A549 (cell line): ENCODE measurements at regions of chr20 and their contacts with region 1.

Region 1: DNA sequence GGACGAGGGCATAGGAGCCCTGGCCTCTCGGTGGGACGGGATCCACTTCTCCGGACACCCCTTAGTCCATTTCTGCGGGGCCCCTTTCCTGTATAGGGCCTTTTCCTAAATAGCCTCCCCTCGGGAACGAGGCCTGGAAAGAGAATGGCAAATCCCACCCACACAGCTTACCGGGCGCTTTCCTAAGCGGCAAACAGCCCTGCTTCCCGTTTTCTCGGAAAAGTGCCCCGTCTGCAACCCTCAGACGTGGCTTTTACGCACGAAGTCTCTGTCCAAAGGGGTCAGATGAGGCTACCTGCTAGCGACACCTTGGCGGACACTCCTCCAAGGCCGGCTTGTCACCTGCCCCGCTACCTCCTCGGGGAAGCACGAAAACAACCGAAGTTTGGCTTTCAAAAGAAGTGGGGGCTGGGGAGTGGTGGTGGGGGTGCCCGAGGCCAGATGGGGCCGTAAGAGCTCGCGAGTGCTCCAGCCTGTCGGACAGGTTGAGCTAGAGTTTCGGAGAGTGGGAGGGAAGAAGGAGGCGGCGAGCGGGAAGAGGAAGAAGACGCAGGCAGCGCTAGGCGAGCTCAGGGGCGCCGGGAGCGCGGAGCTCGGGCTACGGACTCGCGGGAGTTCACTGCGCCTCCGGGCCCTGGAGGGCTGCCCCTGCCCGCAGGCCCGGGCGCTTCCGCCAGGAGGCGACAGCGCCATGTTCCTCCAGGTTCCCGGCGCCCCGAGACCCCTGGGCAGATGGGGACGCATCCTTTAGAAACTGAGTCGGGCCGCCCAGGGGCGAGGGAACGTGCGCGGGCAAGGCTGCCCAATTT is 768 bp downstream of the TFAP2C start:
- DNase-seq: peak; percentile 83 to 88
- ATAC-seq: peak; percentile 76 to 87
- H3K4me3 ChIP-seq: peak overlapping the region; percentile 86
- H3K27ac ChIP-seq: peak overlapping the region; percentile 90 to 94
- H3K4me1 ChIP-seq: peaks cover 33% of the 10 kb centered on the region
- CTCF ChIP-seq: peak; percentile 88
- EP300 ChIP-seq: no peak
- POLR2A ChIP-seq: no peak
- RAD21 ChIP-seq: peak; percentile 69 to 94

Region 2: DNA sequence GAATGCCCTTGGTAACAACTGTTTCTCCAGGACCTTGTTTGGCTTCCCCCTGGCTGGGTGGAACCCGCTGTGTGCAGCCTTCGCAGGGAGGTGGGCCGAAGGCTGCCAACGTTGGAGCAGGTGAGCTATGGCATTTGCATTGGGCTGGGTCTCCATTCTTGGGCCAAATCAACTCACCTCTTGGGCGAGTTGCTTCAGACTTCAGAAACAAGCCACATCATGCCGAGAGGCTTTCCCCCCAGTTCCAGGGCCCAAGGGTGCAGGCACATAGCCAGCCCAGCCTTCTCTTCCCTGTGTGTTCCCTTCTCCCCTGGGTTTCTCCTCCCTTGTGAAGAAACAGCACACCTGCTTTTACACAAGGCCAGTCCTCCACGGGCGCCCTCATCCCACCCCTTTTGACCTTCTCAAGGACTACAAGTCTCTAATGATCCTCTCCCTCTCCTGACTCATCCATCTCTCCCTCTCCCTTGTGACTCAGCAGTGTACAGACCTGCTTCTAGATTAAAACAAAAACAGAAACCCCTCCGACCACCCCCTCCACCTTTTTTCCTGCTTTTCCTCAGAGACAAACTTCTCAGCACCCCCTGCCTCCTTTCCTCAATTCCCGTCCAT is 55.2 kb before region 1 on chr20:
- CTCF ChIA-PET with region 1: interaction called, 10 read pairs
- POLR2A ChIA-PET with region 1: no interaction called
- DNase-seq: no peak
- ATAC-seq: peak; percentile 17 to 37; a peak in 2 of 6 replicates
- H3K4me3 ChIP-seq: no peak overlapping the region
- H3K27ac ChIP-seq: no peak overlapping the region
- H3K4me1 ChIP-seq: no peaks in the 10 kb centered on the region
- CTCF ChIP-seq: no peak
- EP300 ChIP-seq: no peak
- POLR2A ChIP-seq: no peak
- RAD21 ChIP-seq: no peak

Region 3: DNA sequence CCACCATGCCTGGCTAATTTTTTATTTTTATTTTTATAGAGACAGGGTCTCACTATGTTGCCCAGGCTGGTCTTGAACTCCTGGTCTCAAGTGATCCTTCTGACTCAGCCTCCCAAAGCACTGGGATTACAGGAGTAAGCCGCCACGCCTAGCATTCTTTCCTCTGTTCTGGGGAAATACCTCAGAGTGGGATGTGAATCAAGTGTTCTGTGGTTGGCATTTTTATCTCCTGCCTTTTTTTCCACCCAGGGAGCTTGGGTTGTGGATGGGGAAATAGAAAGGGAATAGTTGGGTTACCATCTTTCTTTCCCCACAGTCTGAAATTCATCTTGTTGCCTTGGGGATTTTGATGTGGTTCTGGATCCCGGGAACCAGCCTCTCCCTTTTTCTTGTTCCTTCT is 23.3 kb after region 1 on chr20:
- CTCF ChIA-PET with region 1: interaction called, 11 read pairs
- POLR2A ChIA-PET with region 1: interaction called, 4 read pairs
- DNase-seq: peak in 1 of 2 experiments; percentile 45
- ATAC-seq: no peak
- H3K4me3 ChIP-seq: no peak overlapping the region
- H3K27ac ChIP-seq: no peak overlapping the region
- H3K4me1 ChIP-seq: no peaks in the 10 kb centered on the region
- CTCF ChIP-seq: no peak
- EP300 ChIP-seq: no peak
- POLR2A ChIP-seq: no peak
- RAD21 ChIP-seq: no peak

Region 4: DNA sequence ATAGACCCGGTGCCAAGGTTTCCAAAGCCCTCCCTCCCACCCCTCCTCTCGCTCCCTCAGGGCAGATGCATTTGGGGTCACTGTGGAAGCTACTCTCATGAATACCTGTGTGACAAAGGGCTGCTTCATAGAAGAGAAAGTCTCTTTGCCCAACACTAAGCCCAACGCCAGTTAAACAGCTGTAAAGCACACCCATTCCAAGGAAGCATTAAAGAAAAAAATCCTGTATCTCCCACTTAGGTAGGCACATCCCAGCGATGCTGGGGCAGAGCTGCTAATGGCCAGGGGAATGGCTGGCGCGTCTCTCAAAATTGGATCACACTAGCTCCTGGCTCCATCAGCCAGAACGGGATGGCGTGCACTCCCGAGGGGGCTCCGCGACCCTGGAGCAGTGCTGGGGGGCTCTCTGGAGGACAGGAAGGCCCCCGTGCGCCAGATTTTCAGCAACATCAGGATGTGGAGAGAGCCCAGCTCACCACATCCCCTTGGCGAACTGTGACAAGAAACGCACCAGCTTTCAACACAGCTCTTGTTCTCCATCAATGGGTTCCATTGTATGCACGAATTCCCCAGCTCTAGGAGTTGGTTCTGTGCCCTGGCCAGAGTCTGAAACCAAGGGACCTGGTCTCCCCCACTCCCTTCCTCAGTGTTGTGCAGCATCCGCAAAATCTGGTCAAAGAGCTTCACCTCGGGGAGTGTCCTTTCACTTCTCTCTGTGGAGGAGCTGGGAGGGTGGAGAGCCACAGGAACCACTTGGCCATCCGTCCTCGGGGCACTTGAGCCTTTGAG is 73.3 kb after region 1 on chr20:
- CTCF ChIA-PET with region 1: no interaction called
- POLR2A ChIA-PET with region 1: no interaction called
- DNase-seq: no peak
- ATAC-seq: no peak
- H3K4me3 ChIP-seq: no peak overlapping the region
- H3K27ac ChIP-seq: no peak overlapping the region
- H3K4me1 ChIP-seq: no peaks in the 10 kb centered on the region
- CTCF ChIP-seq: no peak
- EP300 ChIP-seq: no peak
- POLR2A ChIP-seq: no peak
- RAD21 ChIP-seq: no peak

Region 5: GRCh38 chr20:56957737-56958553 is 328.1 kb after region 1 on chr20:
- CTCF ChIA-PET with region 1: interaction called, 15 read pairs
- POLR2A ChIA-PET with region 1: no interaction called
- DNase-seq: no peak
- ATAC-seq: no peak
- H3K4me3 ChIP-seq: no peak overlapping the region
- H3K27ac ChIP-seq: no peak overlapping the region
- H3K4me1 ChIP-seq: peaks cover 6% of the 10 kb centered on the region
- CTCF ChIP-seq: no peak
- EP300 ChIP-seq: no peak
- POLR2A ChIP-seq: no peak
- RAD21 ChIP-seq: no peak

Region 6: GRCh38 chr20:56985286-56985685 is 355.4 kb after region 1 on chr20:
- CTCF ChIA-PET with region 1: interaction called, 121 read pairs
- POLR2A ChIA-PET with region 1: no interaction called
- DNase-seq: no peak
- ATAC-seq: no peak
- H3K4me3 ChIP-seq: no peak overlapping the region
- H3K27ac ChIP-seq: no peak overlapping the region
- H3K4me1 ChIP-seq: no peaks in the 10 kb centered on the region
- CTCF ChIP-seq: no peak
- EP300 ChIP-seq: no peak
- POLR2A ChIP-seq: no peak
- RAD21 ChIP-seq: no peak

Region 7: DNA sequence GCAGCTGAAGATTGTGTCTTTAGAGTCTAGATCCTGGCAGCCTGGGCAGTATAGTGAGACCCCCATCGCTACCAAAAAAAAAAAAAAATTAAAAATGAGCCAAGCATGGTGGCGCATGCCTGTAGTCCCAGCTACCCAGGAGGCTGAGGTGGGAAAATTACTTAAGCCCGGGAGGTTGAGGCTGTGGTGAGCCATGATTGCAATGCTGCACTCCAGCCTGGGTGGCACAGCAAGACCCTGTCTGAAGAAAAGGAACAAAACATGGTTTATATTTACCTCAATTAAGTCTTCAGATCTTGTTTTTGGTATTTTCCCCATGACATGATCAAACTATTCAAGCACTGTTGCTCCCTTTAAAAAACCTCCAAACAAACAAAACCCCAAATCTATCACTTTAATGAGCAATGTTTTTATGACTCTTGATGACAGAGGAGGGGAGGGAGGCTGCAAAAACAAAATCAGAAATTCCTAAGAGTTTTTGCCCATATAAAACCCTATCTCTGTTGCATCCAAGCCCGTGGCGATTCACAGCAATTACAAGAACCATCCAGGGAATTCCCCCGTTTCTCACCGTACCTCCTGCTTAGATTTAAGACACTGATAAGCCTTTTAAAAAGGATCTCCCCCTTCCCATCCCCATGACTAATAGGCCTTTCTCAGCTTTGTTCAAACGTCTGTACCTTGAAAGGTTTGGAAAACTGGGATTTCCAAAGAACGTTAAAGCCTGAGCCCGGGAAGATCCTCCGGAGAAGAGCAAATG is 376.7 kb after region 1 on chr20:
- CTCF ChIA-PET with region 1: interaction called, 15 read pairs
- POLR2A ChIA-PET with region 1: no interaction called
- DNase-seq: peak; percentile 31 to 42
- ATAC-seq: peak in 1 of 2 experiments; percentile 54; a peak in 4 of 6 replicates
- H3K4me3 ChIP-seq: no peak overlapping the region
- H3K27ac ChIP-seq: peak overlapping the region in 1 of 2 experiments; percentile 73; a peak in 3 of 6 replicates
- H3K4me1 ChIP-seq: peaks cover 30% of the 10 kb centered on the region
- CTCF ChIP-seq: no peak
- EP300 ChIP-seq: no peak
- POLR2A ChIP-seq: no peak
- RAD21 ChIP-seq: no peak